T-cell (primary cell): ENCODE measurements at regions of chr14 and their contacts with region 1.

Region 1: GRCh38 chr14:68449561-68450295 is 343.1 kb downstream of the ZFP36L1 start:
- DNase-seq: no peak
- ATAC-seq: no peak
- H3K4me3 ChIP-seq: no peak overlapping the region
- H3K4me3 Mint-ChIP-seq: no peak overlapping the region
- H3K27ac ChIP-seq: no peak overlapping the region
- H3K27ac Mint-ChIP-seq: peak overlapping the region in 1 of 2 donors; percentile 56
- H3K4me1 ChIP-seq: no peaks in the 10 kb centered on the region
- H3K4me1 Mint-ChIP-seq: peaks cover 5 to 12% (median 11%) of the 10 kb centered on the region in 3 donors
- H3K27me3 ChIP-seq: no peaks in the 10 kb centered on the region
- H3K27me3 Mint-ChIP-seq: no peaks in the 10 kb centered on the region

Region 2: GRCh38 chr14:68424443-68425172 is 25.1 kb before region 1 on chr14:
- CTCF ChIA-PET with region 1: no interaction called
- POLR2A ChIA-PET with region 1: interaction called in 1 of 2 experiments, 10 read pairs
- DNase-seq: no peak
- ATAC-seq: no peak
- H3K4me3 ChIP-seq: no peak overlapping the region
- H3K4me3 Mint-ChIP-seq: no peak overlapping the region
- H3K27ac ChIP-seq: no peak overlapping the region
- H3K27ac Mint-ChIP-seq: no peak overlapping the region
- H3K4me1 ChIP-seq: peaks cover under 1 to 1% of the 10 kb centered on the region in 2 experiments
- H3K4me1 Mint-ChIP-seq: peaks cover 9 to 30% (median 12%) of the 10 kb centered on the region in 3 donors
- H3K27me3 ChIP-seq: no peaks in the 10 kb centered on the region
- H3K27me3 Mint-ChIP-seq: no peaks in the 10 kb centered on the region

Region 3: GRCh38 chr14:68439676-68440075 is 10.1 kb before region 1 on chr14:
- CTCF ChIA-PET with region 1: no interaction called
- POLR2A ChIA-PET with region 1: no interaction called
- DNase-seq: no peak
- ATAC-seq: no peak
- H3K4me3 ChIP-seq: no peak overlapping the region
- H3K4me3 Mint-ChIP-seq: no peak overlapping the region
- H3K27ac ChIP-seq: no peak overlapping the region
- H3K27ac Mint-ChIP-seq: no peak overlapping the region
- H3K4me1 ChIP-seq: no peaks in the 10 kb centered on the region
- H3K4me1 Mint-ChIP-seq: peaks cover 0 to 5% (median 5%) of the 10 kb centered on the region in 3 donors
- H3K27me3 ChIP-seq: no peaks in the 10 kb centered on the region
- H3K27me3 Mint-ChIP-seq: no peaks in the 10 kb centered on the region